B cell (primary cell): ENCODE measurements at regions of chr3 and their contacts with region 1.

Region 1: GRCh38 chr3:56753206-56753820 is 48.4 kb downstream of the ARHGEF3 start:
- DNase-seq: peak; percentile 5
- ATAC-seq: no peak
- H3K4me3 ChIP-seq: peak overlapping the region in 2 of 5 experiments; percentile 72 to 86
- H3K4me3 Mint-ChIP-seq: peak overlapping the region; percentile 95
- H3K27ac ChIP-seq: peak overlapping the region; percentile 85 to 87
- H3K27ac Mint-ChIP-seq: peak overlapping the region; percentile 95
- H3K4me1 ChIP-seq: peaks cover 41 to 53% of the 10 kb centered on the region in 2 donors
- H3K4me1 Mint-ChIP-seq: peaks cover 58% of the 10 kb centered on the region
- H3K27me3 ChIP-seq: no peaks in the 10 kb centered on the region
- H3K27me3 Mint-ChIP-seq: no peaks in the 10 kb centered on the region
- CTCF ChIP-seq: no peak

Region 2: DNA sequence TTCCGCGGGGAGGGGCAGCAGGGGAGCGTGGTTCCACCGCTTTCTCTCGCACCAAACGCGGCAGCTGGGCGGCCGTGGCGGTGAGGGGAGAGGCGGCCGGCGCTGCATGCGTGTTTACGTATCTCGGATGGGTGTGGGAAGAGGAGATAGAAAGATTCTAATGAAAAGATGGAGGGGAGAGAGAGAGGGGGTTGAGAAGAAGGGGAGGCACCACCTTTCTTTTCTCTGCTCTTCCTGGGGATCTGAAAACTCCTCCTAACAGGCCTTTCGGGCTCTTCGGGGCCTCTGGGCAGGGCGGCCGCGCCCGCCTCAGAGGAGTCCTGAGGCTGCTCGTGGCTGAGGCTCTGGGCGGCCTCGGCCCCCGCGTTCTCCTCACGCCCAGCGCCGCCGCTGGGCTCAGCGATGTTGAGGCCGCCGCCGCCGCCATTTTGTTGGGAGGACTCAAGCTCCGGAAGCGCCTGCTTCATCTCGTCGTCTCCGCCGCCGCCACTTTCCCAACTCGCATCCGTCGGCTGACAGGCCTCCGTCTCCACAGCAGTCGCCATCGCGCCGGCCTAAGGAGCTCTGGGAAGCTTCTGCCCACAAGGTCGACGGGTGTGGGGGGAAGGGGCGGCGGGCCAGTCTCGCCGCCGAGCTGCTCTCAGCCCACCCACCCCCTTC is 70.7 kb before region 1 on chr3:
- CTCF ChIA-PET with region 1: interaction called, 4 read pairs
- POLR2A ChIA-PET with region 1: interaction called, 9 read pairs
- intact Hi-C with region 1: loop called (anchors 2 kb)
- DNase-seq: peak; percentile 91
- ATAC-seq: peak; percentile 69
- H3K4me3 ChIP-seq: peak overlapping the region; percentile 74 to 99 (median 85)
- H3K4me3 Mint-ChIP-seq: peak overlapping the region; percentile 99
- H3K27ac ChIP-seq: peak overlapping the region; percentile 98 to 99
- H3K27ac Mint-ChIP-seq: peak overlapping the region; percentile 99
- H3K4me1 ChIP-seq: peaks cover 16 to 24% of the 10 kb centered on the region in 2 donors
- H3K4me1 Mint-ChIP-seq: peaks cover 42% of the 10 kb centered on the region
- H3K27me3 ChIP-seq: no peaks in the 10 kb centered on the region
- H3K27me3 Mint-ChIP-seq: no peaks in the 10 kb centered on the region
- CTCF ChIP-seq: no peak

Region 3: DNA sequence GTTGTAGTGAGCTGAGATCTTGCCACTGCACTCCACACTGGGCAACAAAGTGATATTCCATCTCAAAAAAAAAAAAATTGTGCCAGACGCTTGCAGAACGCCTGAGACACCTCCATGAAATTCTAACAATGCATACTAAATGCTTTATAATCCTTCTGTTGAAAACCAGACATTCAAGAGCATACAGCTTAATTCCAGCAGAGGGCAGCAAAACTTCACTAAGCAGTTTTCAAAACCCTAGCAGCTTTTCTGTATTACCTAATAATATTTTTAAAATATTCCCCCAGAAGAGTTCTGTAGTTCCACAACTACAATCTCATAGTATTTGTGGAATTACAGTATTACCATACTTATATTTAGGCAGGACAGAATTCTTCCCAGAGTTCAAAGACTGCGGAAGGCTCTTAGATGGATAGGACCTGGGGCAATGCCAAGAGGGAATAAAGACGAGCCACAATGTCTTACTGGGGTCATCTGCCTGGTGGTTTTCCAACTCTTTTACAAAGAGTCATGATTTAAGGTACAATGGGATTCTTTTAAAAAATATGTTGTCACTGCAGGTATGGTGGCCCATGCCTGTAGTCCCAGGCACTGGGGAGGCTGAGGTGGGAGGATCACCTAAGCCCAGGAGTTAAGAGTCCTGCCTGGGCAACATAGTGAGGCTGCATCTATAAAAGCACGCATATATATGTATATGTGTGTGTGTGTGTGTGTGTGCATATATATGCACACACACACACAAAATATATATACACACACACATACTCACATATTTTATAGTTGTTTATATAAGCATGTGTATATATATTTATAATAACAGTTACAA is 50.6 kb before region 1 on chr3:
- CTCF ChIA-PET with region 1: interaction called, 12 read pairs
- POLR2A ChIA-PET with region 1: interaction called, 7 read pairs
- intact Hi-C with region 1: loop called (anchors 5 kb)
- DNase-seq: peak; percentile 81
- ATAC-seq: peak; percentile 64
- H3K4me3 ChIP-seq: no peak overlapping the region
- H3K4me3 Mint-ChIP-seq: no peak overlapping the region
- H3K27ac ChIP-seq: no peak overlapping the region
- H3K27ac Mint-ChIP-seq: no peak overlapping the region
- H3K4me1 ChIP-seq: peaks cover 0 to 4% of the 10 kb centered on the region in 2 donors
- H3K4me1 Mint-ChIP-seq: peaks cover 3% of the 10 kb centered on the region
- H3K27me3 ChIP-seq: no peaks in the 10 kb centered on the region
- H3K27me3 Mint-ChIP-seq: no peaks in the 10 kb centered on the region
- CTCF ChIP-seq: peak; percentile 93

Region 4: GRCh38 chr3:56725175-56725574 is 28.1 kb before region 1 on chr3:
- CTCF ChIA-PET with region 1: no interaction called
- POLR2A ChIA-PET with region 1: interaction called, 10 read pairs
- intact Hi-C with region 1: no loop called
- DNase-seq: peak; percentile 15
- ATAC-seq: peak; percentile 57
- H3K4me3 ChIP-seq: no peak overlapping the region
- H3K4me3 Mint-ChIP-seq: no peak overlapping the region
- H3K27ac ChIP-seq: peak overlapping the region in 1 of 2 donors; percentile 7
- H3K27ac Mint-ChIP-seq: peak overlapping the region; percentile 56
- H3K4me1 ChIP-seq: peaks cover 0 to 18% of the 10 kb centered on the region in 2 donors
- H3K4me1 Mint-ChIP-seq: peaks cover 17% of the 10 kb centered on the region
- H3K27me3 ChIP-seq: no peaks in the 10 kb centered on the region
- H3K27me3 Mint-ChIP-seq: no peaks in the 10 kb centered on the region
- CTCF ChIP-seq: no peak

Region 5: DNA sequence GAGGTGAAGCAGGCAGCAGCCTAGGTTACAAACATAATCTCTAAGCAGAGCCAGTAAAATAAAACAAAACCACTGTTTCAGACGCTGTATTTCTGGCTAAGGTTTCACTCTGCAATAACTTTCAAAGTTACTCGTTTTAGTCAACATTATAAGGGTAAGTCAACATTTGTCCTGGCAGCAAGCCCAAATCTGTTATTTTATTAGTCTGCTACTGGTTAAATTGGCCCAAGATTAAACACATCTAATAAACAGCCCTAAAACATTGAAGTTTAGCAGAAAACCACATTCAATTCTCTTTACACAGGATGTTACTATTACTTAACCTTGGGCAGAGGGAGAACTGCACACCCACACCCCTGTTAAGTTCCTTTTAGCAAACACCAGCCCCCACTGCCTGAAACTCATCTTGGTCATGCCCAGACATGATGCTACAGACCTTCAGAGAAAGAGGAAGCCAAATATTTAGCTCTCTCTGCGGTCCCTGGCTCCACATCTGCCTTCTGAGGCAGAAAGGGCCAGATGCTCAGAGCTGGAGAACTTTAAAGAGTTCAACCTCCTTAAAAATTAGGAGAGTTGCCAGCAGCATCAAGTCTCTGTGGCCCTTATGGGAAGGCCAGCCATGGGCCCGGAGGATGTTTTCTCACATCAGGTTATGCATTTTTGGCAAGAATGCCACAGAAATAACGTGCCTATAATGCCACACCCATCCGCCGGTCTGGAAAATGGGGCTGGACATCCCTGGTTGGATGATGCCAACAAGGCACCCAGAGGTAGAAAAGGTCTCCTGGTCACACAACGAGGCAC is 30.5 kb after region 1 on chr3:
- CTCF ChIA-PET with region 1: interaction called, 22 read pairs
- POLR2A ChIA-PET with region 1: interaction called, 13 read pairs
- intact Hi-C with region 1: loop called (anchors 1 kb)
- DNase-seq: peak; percentile 87
- ATAC-seq: peak; percentile 99
- H3K4me3 ChIP-seq: peak overlapping the region in 1 of 5 experiments; percentile 45
- H3K4me3 Mint-ChIP-seq: peak overlapping the region; percentile 52
- H3K27ac ChIP-seq: peak overlapping the region; percentile 71 to 78
- H3K27ac Mint-ChIP-seq: peak overlapping the region; percentile 91
- H3K4me1 ChIP-seq: peaks cover 55 to 77% of the 10 kb centered on the region in 2 donors
- H3K4me1 Mint-ChIP-seq: peaks cover 82% of the 10 kb centered on the region
- H3K27me3 ChIP-seq: no peaks in the 10 kb centered on the region
- H3K27me3 Mint-ChIP-seq: no peaks in the 10 kb centered on the region
- CTCF ChIP-seq: no peak

Region 6: GRCh38 chr3:57068437-57069089 is 315.2 kb after region 1 on chr3:
- CTCF ChIA-PET with region 1: no interaction called
- POLR2A ChIA-PET with region 1: no interaction called
- intact Hi-C with region 1: loop called (anchors 1 kb)
- DNase-seq: peak; percentile 92
- ATAC-seq: peak; percentile 99
- H3K4me3 ChIP-seq: peak overlapping the region in 1 of 5 experiments; percentile 34
- H3K4me3 Mint-ChIP-seq: peak overlapping the region; percentile 74
- H3K27ac ChIP-seq: peak overlapping the region in 1 of 2 donors; percentile 21
- H3K27ac Mint-ChIP-seq: peak overlapping the region; percentile 80
- H3K4me1 ChIP-seq: peaks cover 18 to 22% of the 10 kb centered on the region in 2 donors
- H3K4me1 Mint-ChIP-seq: peaks cover 21% of the 10 kb centered on the region
- H3K27me3 ChIP-seq: peaks cover 0 to 46% (median 21%) of the 10 kb centered on the region in 4 experiments
- H3K27me3 Mint-ChIP-seq: peaks cover 42% of the 10 kb centered on the region
- CTCF ChIP-seq: no peak